Naive thymus-derived CD4-positive, alpha-beta T cell (primary cell): ENCODE measurements at regions of chr6 and their contacts with region 1.

Region 1: GRCh38 chr6:35663447-35664235 is 25.1 kb downstream of the FKBP5 start:
- DNase-seq: peak in 6 of 9 donors; percentile 28 to 45 (median 36)
- ATAC-seq: peak; percentile 82
- H3K4me3 ChIP-seq: peak overlapping the region; percentile 21
- H3K4me3 Mint-ChIP-seq: no peak overlapping the region
- H3K27ac ChIP-seq: peak overlapping the region; percentile 76
- H3K27ac Mint-ChIP-seq: no peak overlapping the region
- H3K4me1 ChIP-seq: peaks cover 25 to 46% of the 10 kb centered on the region in 2 donors
- H3K4me1 Mint-ChIP-seq: peaks cover 8 to 27% (median 18%) of the 10 kb centered on the region in 7 donors
- H3K27me3 ChIP-seq: no peaks in the 10 kb centered on the region
- H3K27me3 Mint-ChIP-seq: no peaks in the 10 kb centered on the region

Region 2: DNA sequence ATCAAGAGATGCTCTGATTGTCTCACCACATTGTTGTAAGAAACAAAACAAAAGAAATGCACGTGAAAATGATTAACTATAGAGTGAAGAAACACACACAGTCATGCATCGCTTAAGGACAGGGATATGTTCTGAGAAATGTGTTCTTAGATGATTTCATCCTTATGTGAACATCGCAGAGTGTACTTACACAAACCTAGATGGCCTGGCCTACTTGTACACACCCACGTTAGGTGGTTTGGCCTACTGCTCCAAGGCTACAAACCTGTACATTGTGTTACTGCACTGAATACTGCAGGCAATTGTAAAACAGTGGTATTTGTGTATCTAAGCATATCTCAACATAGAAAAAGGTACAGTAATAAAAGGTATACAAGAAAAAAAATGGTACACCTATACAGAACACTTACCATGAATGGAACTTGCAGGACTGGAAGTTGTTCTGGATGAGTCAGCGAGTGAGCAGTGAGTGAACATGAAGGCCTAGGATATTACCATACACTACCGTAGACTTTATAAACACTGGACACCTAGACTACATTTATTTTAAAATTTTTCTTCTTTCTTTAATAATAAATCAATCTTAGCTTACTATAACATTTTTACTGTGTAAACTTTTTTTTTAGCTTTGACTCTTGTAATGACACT is 23.5 kb before region 1 on chr6:
- CTCF ChIA-PET with region 1: interaction called, 16 read pairs
- POLR2A ChIA-PET with region 1: interaction called, 8 read pairs
- intact Hi-C with region 1: no loop called
- DNase-seq: no peak
- ATAC-seq: no peak
- H3K4me3 ChIP-seq: no peak overlapping the region
- H3K4me3 Mint-ChIP-seq: peak overlapping the region in 1 of 10 donors; percentile 10
- H3K27ac ChIP-seq: no peak overlapping the region
- H3K27ac Mint-ChIP-seq: peak overlapping the region; percentile 50 to 86 (median 74)
- H3K4me1 ChIP-seq: peaks cover 5 to 49% of the 10 kb centered on the region in 2 donors
- H3K4me1 Mint-ChIP-seq: peaks cover 20 to 77% (median 75%) of the 10 kb centered on the region in 7 donors
- H3K27me3 ChIP-seq: no peaks in the 10 kb centered on the region
- H3K27me3 Mint-ChIP-seq: no peaks in the 10 kb centered on the region

Region 3: GRCh38 chr6:35650015-35650414 is 13.6 kb before region 1 on chr6:
- CTCF ChIA-PET with region 1: interaction called, 16 read pairs
- POLR2A ChIA-PET with region 1: interaction called, 7 read pairs
- intact Hi-C with region 1: loop called in 1 of 2 experiments (anchors 2 kb)
- DNase-seq: no peak
- ATAC-seq: no peak
- H3K4me3 ChIP-seq: no peak overlapping the region
- H3K4me3 Mint-ChIP-seq: no peak overlapping the region
- H3K27ac ChIP-seq: no peak overlapping the region
- H3K27ac Mint-ChIP-seq: peak overlapping the region in 1 of 9 donors; percentile 38
- H3K4me1 ChIP-seq: peaks cover 0 to 26% of the 10 kb centered on the region in 2 donors
- H3K4me1 Mint-ChIP-seq: peaks cover 25 to 87% (median 69%) of the 10 kb centered on the region in 7 donors
- H3K27me3 ChIP-seq: no peaks in the 10 kb centered on the region
- H3K27me3 Mint-ChIP-seq: no peaks in the 10 kb centered on the region